ENCODE measurements at regions of chr1 and their contacts with region 1.

Region 1: GRCh38 chr1:38888423-38889333 is 7.3 kb upstream of the GJA9 start:
- DNase-seq: no peak
- ATAC-seq: no peak
- H3K4me3 ChIP-seq: no peak overlapping the region
- H3K27ac ChIP-seq: no peak overlapping the region
- H3K4me1 ChIP-seq: no peaks in the 10 kb centered on the region
- H3K27me3 ChIP-seq: no peaks in the 10 kb centered on the region
- CTCF ChIP-seq: no peak

Region 2: DNA sequence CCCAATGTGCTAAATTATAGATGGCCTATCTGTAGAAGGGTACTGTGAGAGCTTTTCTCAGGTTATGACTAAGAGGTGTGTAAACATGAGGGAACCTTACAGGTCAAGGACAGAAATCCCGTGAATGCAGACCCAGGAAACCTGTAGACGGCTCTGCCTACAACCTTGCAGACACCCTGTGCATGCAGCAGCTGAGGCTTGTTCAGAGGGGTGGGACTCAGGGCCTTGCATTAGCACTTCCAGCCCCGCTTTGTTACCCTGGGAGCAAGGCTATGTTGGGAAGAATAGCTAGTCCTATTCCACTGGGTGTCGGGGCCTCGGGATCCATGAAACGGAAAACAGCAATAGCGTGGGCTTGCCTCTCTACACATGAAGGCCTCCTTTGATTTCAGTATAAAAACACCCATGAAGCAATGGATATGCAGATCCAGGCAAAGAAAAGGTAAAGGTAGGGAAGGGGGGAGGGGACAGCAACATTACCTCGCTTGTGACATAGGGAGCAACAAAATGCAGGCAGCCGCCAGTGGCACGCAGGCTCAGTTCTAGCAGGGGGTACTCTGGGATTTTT is 128.0 kb after region 1 on chr1:
- CTCF ChIA-PET with region 1: no interaction called
- POLR2A ChIA-PET with region 1: no interaction called
- in situ Hi-C with region 1: no loop called
- intact Hi-C with region 1: no loop called
- DNase-seq: no peak
- ATAC-seq: peak; percentile 62
- H3K4me3 ChIP-seq: no peak overlapping the region
- H3K27ac ChIP-seq: no peak overlapping the region; the same call in 1 of the 2 replicates
- H3K4me1 ChIP-seq: peaks cover 8% of the 10 kb centered on the region
- H3K27me3 ChIP-seq: no peaks in the 10 kb centered on the region
- CTCF ChIP-seq: no peak

Region 3: DNA sequence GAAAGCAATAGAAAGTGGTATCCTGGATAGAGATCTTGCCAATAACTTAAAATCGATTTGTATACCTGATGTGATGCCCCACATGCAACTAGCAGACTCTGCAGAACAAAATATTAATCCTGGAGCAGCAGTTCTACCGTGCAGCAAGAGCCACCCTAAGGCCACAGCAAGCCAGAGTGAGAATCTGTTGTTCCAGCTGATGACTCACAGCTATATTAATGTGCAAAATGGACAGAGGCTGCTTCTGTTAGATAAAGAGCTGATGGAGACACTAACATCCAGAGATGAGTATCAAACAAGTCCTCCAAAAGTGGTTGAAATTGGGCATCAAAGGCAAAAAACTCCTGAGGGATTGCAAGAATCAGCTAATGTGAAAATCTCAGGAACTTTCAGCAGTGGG is 443.6 kb after region 1 on chr1:
- CTCF ChIA-PET with region 1: no interaction called
- POLR2A ChIA-PET with region 1: interaction called, 10 read pairs
- in situ Hi-C with region 1: no loop called
- intact Hi-C with region 1: no loop called
- DNase-seq: no peak
- ATAC-seq: no peak
- H3K4me3 ChIP-seq: no peak overlapping the region
- H3K27ac ChIP-seq: no peak overlapping the region
- H3K4me1 ChIP-seq: no peaks in the 10 kb centered on the region
- H3K27me3 ChIP-seq: no peaks in the 10 kb centered on the region
- CTCF ChIP-seq: no peak

Region 4: DNA sequence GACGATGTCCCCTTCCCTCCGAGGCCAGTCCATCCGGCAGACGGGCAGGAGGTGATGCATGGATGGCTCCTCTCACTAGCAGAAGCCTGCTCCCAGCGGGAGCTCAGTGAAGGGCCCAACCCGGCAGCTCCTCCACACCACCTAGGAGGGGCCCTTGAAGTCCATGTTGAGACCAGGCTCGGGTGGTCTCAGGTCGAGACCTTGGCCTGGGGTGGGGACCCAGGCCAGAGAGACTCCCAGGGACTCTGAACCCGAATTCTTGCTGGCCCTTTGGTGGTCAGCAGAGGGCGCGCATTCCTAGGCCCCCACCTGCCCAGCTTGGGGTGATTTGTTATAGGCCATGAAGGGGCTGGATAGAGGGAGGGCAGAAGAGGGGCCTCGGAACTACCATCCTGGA is 783.9 kb after region 1 on chr1:
- CTCF ChIA-PET with region 1: no interaction called
- POLR2A ChIA-PET with region 1: no interaction called
- in situ Hi-C with region 1: no loop called
- intact Hi-C with region 1: no loop called
- DNase-seq: no peak
- ATAC-seq: no peak
- H3K4me3 ChIP-seq: peak overlapping the region in 1 of 2 experiments; percentile 38; a peak in 1 of 4 replicates
- H3K27ac ChIP-seq: no peak overlapping the region
- H3K4me1 ChIP-seq: no peaks in the 10 kb centered on the region
- H3K27me3 ChIP-seq: peaks cover 13% of the 10 kb centered on the region
- CTCF ChIP-seq: peak; percentile 81; the same call in 1 of the 2 replicates

Measured in Panc1 (cell line).